ENCODE measurements at regions of chr10 and their contacts with region 1.

Region 1: DNA sequence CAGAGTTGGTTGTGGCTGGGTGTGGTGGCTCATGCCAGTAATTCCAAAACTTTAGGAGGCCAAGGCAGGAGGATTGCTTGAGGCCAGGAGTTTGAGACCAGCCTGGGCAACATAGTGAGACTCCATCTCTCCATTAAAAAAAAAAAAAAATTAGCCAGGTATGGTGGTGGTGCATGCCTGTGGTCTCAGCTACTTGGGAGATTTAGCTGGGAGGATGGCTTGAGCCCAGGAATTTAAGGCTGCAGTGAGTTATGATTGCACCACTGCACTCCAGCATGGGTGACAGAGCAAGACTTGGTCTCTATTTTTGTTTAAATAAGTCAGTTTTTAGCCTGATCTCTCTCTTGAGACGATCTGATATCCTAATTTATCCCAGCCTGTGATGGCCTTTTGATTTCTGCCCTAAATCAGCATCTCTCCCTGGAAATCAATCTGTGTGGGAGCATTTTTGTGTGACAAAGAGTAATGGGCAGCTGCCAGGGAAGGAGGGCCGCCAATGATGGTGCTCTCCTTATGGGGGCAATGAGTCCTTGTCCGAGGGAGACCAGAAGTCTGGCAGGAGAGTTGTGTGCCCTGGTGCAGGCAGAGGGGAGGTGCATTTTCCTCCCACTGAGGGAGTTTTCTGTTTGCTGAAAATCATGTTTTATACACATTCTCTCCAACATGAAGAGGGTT is 111.0 kb downstream of the NRP1 start:
- DNase-seq: no peak
- H3K4me3 ChIP-seq: no peak overlapping the region
- H3K4me3 Mint-ChIP-seq: peak overlapping the region; percentile 21
- H3K27ac Mint-ChIP-seq: peak overlapping the region; percentile 90
- H3K4me1 ChIP-seq: peaks cover 57% of the 10 kb centered on the region
- H3K4me1 Mint-ChIP-seq: peaks cover 45% of the 10 kb centered on the region
- H3K27me3 ChIP-seq: no peaks in the 10 kb centered on the region
- H3K27me3 Mint-ChIP-seq: no peaks in the 10 kb centered on the region
- CTCF ChIP-seq: no peak

Region 2: GRCh38 chr10:33112831-33113455 is 110.5 kb before region 1 on chr10:
- CTCF ChIA-PET with region 1: no interaction called
- POLR2A ChIA-PET with region 1: no interaction called
- intact Hi-C with region 1: no loop called
- DNase-seq: no peak
- H3K4me3 ChIP-seq: no peak overlapping the region
- H3K4me3 Mint-ChIP-seq: no peak overlapping the region
- H3K27ac Mint-ChIP-seq: no peak overlapping the region
- H3K4me1 ChIP-seq: no peaks in the 10 kb centered on the region
- H3K4me1 Mint-ChIP-seq: no peaks in the 10 kb centered on the region
- H3K27me3 ChIP-seq: no peaks in the 10 kb centered on the region; the same call in 1 of the 2 replicates
- H3K27me3 Mint-ChIP-seq: peaks cover 2% of the 10 kb centered on the region
- CTCF ChIP-seq: no peak

Region 3: DNA sequence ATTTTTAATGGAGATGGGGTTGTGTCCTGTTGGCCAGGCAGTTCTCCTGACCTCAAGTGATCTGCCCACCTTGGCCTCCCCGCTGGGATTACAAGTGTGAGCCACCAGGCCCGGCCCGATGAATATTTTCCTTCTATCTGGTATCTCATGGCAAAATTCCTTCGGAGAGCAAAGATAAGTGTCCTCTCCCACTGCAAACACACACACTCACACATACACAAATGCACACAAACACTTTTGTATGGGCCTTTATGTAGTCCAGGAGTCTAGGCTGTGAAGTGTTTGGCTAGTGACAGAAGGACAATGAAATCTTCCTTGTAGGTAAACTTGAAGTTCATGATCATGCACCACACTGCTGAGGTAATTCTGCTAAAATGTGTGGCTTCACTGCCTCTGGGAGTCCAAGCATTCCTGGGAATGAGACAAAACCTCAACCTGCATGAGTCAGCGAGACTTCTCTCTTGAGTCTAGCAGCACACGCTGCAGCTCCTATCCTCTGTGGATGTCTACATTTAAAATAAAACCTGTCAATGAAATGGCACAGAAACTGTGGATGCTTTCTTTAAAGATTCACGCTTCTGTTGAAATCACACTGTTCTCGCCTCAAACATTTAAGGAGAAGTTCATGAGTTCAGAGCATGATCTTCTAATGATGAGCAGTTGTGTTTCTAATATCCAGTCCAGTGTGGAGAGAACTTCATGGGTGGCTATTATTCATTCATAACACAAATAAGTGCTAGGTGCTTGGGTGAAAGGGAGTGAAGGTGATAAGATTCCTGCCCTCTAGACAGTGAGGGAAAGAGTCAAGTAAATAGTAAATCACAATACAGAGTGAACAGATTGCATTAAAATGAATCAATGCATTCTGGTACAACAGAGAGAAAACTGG is 14.5 kb after region 1 on chr10:
- CTCF ChIA-PET with region 1: no interaction called
- POLR2A ChIA-PET with region 1: no interaction called
- intact Hi-C with region 1: loop called (anchors 1 kb)
- DNase-seq: peak; percentile 61 to 70
- H3K4me3 ChIP-seq: no peak overlapping the region
- H3K4me3 Mint-ChIP-seq: peak overlapping the region; percentile 14
- H3K27ac Mint-ChIP-seq: peak overlapping the region; percentile 88
- H3K4me1 ChIP-seq: peaks cover 87% of the 10 kb centered on the region
- H3K4me1 Mint-ChIP-seq: peaks cover 47% of the 10 kb centered on the region
- H3K27me3 ChIP-seq: no peaks in the 10 kb centered on the region
- H3K27me3 Mint-ChIP-seq: no peaks in the 10 kb centered on the region
- CTCF ChIP-seq: no peak

Region 4: GRCh38 chr10:33243703-33244102 is 20.2 kb after region 1 on chr10:
- CTCF ChIA-PET with region 1: no interaction called
- POLR2A ChIA-PET with region 1: no interaction called
- intact Hi-C with region 1: loop called (anchors 2 kb)
- DNase-seq: no peak
- H3K4me3 ChIP-seq: no peak overlapping the region
- H3K4me3 Mint-ChIP-seq: no peak overlapping the region
- H3K27ac Mint-ChIP-seq: no peak overlapping the region
- H3K4me1 ChIP-seq: peaks cover 61% of the 10 kb centered on the region
- H3K4me1 Mint-ChIP-seq: peaks cover 20% of the 10 kb centered on the region
- H3K27me3 ChIP-seq: no peaks in the 10 kb centered on the region
- H3K27me3 Mint-ChIP-seq: no peaks in the 10 kb centered on the region
- CTCF ChIP-seq: no peak

Region 5: GRCh38 chr10:33258967-33259366 is 35.5 kb after region 1 on chr10:
- CTCF ChIA-PET with region 1: no interaction called
- POLR2A ChIA-PET with region 1: no interaction called
- intact Hi-C with region 1: loop called (anchors 1 kb)
- DNase-seq: no peak
- H3K4me3 ChIP-seq: no peak overlapping the region
- H3K4me3 Mint-ChIP-seq: no peak overlapping the region
- H3K27ac Mint-ChIP-seq: peak overlapping the region; percentile 55
- H3K4me1 ChIP-seq: peaks cover 42% of the 10 kb centered on the region
- H3K4me1 Mint-ChIP-seq: peaks cover 38% of the 10 kb centered on the region
- H3K27me3 ChIP-seq: no peaks in the 10 kb centered on the region
- H3K27me3 Mint-ChIP-seq: no peaks in the 10 kb centered on the region
- CTCF ChIP-seq: no peak

Region 6: DNA sequence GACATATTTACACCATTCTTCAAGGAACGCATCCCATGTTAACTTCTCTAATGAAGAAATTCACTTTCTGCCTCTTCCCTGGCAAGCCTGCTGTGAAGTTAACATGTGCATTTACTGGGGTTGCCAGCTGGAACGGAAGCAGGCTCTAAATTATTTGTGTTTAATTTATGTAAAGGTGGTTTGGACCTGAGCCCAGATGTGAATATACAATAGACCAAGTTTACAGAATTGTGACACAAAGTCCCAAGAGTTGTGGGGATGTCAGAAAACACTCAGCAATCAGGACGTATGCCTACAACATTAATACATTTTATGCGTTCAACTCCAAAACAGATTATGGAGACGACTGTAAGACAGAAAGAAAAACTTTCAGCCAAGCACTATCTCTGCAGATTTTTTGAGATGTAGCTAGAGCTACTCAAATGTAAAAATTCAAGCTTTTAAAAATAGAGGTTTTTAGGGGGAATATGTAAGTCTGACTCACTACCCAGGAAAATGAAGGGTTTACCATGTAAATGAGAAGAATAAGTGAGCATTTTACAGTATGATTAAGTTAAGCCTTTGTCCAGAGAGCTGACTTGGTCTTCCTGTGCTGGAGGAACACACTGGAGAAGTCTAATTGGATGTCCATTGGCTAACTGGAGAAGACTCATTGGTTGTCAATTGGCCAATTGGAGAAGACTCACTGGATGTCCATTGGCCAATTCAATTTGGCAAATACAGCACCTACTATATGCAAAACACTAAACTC is 91.5 kb after region 1 on chr10:
- CTCF ChIA-PET with region 1: no interaction called
- POLR2A ChIA-PET with region 1: no interaction called
- intact Hi-C with region 1: loop called (anchors 5 kb)
- DNase-seq: no peak
- H3K4me3 ChIP-seq: no peak overlapping the region
- H3K4me3 Mint-ChIP-seq: no peak overlapping the region
- H3K27ac Mint-ChIP-seq: peak overlapping the region; percentile 74
- H3K4me1 ChIP-seq: peaks cover 34% of the 10 kb centered on the region
- H3K4me1 Mint-ChIP-seq: peaks cover 26% of the 10 kb centered on the region
- H3K27me3 ChIP-seq: no peaks in the 10 kb centered on the region
- H3K27me3 Mint-ChIP-seq: no peaks in the 10 kb centered on the region
- CTCF ChIP-seq: no peak

Measured in Caco-2 (cell line).